HepG2 (cell line): ENCODE measurements at regions of chr4 and their contacts with region 1.

Region 1: GRCh38 chr4:150664935-150665334 is 83.0 kb downstream of the MAB21L2 start:
- DNase-seq: peak; percentile 7
- ATAC-seq: no peak
- H3K4me3 ChIP-seq: no peak overlapping the region
- H3K27ac ChIP-seq: no peak overlapping the region
- H3K4me1 ChIP-seq: no peaks in the 10 kb centered on the region
- H3K27me3 ChIP-seq: no peaks in the 10 kb centered on the region
- CTCF ChIP-seq: no peak
- EP300 ChIP-seq: no peak
- POLR2A ChIP-seq: no peak
- RAD21 ChIP-seq: no peak

Region 2: GRCh38 chr4:150648123-150648522 is 16.8 kb before region 1 on chr4:
- CTCF ChIA-PET with region 1: no interaction called
- POLR2A ChIA-PET with region 1: no interaction called
- in situ Hi-C with region 1: no loop called
- intact Hi-C with region 1: loop called (anchors 1 kb)
- DNase-seq: no peak
- ATAC-seq: no peak
- H3K4me3 ChIP-seq: no peak overlapping the region
- H3K27ac ChIP-seq: no peak overlapping the region
- H3K4me1 ChIP-seq: no peaks in the 10 kb centered on the region
- H3K27me3 ChIP-seq: no peaks in the 10 kb centered on the region
- CTCF ChIP-seq: no peak
- EP300 ChIP-seq: no peak
- POLR2A ChIP-seq: no peak
- RAD21 ChIP-seq: no peak

Region 3: GRCh38 chr4:151540728-151541422 is 875.9 kb after region 1 on chr4:
- CTCF ChIA-PET with region 1: no interaction called
- POLR2A ChIA-PET with region 1: no interaction called
- in situ Hi-C with region 1: no loop called
- intact Hi-C with region 1: no loop called
- DNase-seq: no peak
- ATAC-seq: no peak
- H3K4me3 ChIP-seq: no peak overlapping the region
- H3K27ac ChIP-seq: no peak overlapping the region
- H3K4me1 ChIP-seq: no peaks in the 10 kb centered on the region
- H3K27me3 ChIP-seq: no peaks in the 10 kb centered on the region
- CTCF ChIP-seq: no peak
- EP300 ChIP-seq: no peak
- POLR2A ChIP-seq: no peak
- RAD21 ChIP-seq: no peak